IMR-90 (cell line): ENCODE measurements at regions of chr4 and their contacts with region 1.

Region 1: GRCh38 chr4:183074296-183074990 is 24.6 kb upstream of the WWC2 start:
- DNase-seq: peak; percentile 32
- ATAC-seq: peak; percentile 70
- H3K4me3 ChIP-seq: no peak overlapping the region
- H3K27ac ChIP-seq: no peak overlapping the region
- H3K4me1 ChIP-seq: no peaks in the 10 kb centered on the region; the same call in 1 of the 2 replicates
- H3K27me3 ChIP-seq: no peaks in the 10 kb centered on the region
- CTCF ChIP-seq: no peak
- POLR2A ChIP-seq: no peak
- RAD21 ChIP-seq: no peak

Region 2: DNA sequence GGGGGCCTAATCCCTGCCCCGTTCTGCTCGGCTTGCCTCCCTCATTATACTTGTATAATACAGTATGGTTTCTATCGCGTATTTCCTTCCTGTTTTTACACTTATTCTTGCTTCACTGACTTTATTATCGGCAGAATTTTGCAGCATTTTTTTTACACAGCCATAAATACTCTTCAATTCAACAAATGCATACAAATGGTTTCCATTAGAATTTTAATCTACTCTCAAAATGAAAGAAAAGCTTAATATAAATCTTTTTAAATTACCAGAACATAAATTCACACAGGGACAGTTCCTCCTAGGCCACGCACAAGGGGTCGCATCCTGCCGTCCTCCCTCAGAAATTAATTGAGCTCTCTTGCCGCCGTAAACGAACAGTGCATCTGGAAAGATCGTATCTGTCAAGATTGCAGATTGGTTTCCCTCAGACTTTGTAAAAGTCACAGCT is 200.1 kb before region 1 on chr4:
- CTCF ChIA-PET with region 1: no interaction called
- POLR2A ChIA-PET with region 1: no interaction called
- dilution Hi-C with region 1: no loop called
- in situ Hi-C with region 1: no loop called
- intact Hi-C with region 1: no loop called
- DNase-seq: no peak
- ATAC-seq: no peak
- H3K4me3 ChIP-seq: no peak overlapping the region
- H3K27ac ChIP-seq: no peak overlapping the region
- H3K4me1 ChIP-seq: no peaks in the 10 kb centered on the region
- H3K27me3 ChIP-seq: no peaks in the 10 kb centered on the region
- CTCF ChIP-seq: no peak
- POLR2A ChIP-seq: no peak
- RAD21 ChIP-seq: no peak

Region 3: GRCh38 chr4:182917182-182918043 is 157.0 kb before region 1 on chr4 and contains the start of gene DCTD:
- CTCF ChIA-PET with region 1: no interaction called
- POLR2A ChIA-PET with region 1: no interaction called
- dilution Hi-C with region 1: no loop called
- in situ Hi-C with region 1: no loop called
- intact Hi-C with region 1: no loop called
- DNase-seq: peak; percentile 65
- ATAC-seq: peak; percentile 85
- H3K4me3 ChIP-seq: peak within 1 kb of the TSS; percentile 65
- H3K27ac ChIP-seq: peak within 1 kb of the TSS; percentile 97
- H3K4me1 ChIP-seq: peaks cover 16% of the 10 kb centered on the region
- H3K27me3 ChIP-seq: no peaks in the 10 kb centered on the region
- CTCF ChIP-seq: peak; percentile 29
- POLR2A ChIP-seq: peak; percentile 39
- RAD21 ChIP-seq: no peak; the same call in 1 of the 2 replicates
- total RNA-seq, gene DCTD: 84.2 and 90.3 TPM in 2 replicates

Region 4: GRCh38 chr4:182938205-182938645 is 136.2 kb before region 1 on chr4:
- CTCF ChIA-PET with region 1: interaction called, 4 read pairs
- POLR2A ChIA-PET with region 1: no interaction called
- dilution Hi-C with region 1: no loop called
- in situ Hi-C with region 1: loop called (anchors 10 kb)
- intact Hi-C with region 1: loop called (anchors 1 kb)
- DNase-seq: peak; percentile 56
- ATAC-seq: peak; percentile 99
- H3K4me3 ChIP-seq: no peak overlapping the region
- H3K27ac ChIP-seq: no peak overlapping the region
- H3K4me1 ChIP-seq: peaks cover 2% of the 10 kb centered on the region; the same call in 1 of the 2 replicates
- H3K27me3 ChIP-seq: peaks cover 11% of the 10 kb centered on the region
- CTCF ChIP-seq: peak; percentile 90
- POLR2A ChIP-seq: no peak; the same call in 1 of the 2 replicates
- RAD21 ChIP-seq: peak; percentile 95

Region 5: DNA sequence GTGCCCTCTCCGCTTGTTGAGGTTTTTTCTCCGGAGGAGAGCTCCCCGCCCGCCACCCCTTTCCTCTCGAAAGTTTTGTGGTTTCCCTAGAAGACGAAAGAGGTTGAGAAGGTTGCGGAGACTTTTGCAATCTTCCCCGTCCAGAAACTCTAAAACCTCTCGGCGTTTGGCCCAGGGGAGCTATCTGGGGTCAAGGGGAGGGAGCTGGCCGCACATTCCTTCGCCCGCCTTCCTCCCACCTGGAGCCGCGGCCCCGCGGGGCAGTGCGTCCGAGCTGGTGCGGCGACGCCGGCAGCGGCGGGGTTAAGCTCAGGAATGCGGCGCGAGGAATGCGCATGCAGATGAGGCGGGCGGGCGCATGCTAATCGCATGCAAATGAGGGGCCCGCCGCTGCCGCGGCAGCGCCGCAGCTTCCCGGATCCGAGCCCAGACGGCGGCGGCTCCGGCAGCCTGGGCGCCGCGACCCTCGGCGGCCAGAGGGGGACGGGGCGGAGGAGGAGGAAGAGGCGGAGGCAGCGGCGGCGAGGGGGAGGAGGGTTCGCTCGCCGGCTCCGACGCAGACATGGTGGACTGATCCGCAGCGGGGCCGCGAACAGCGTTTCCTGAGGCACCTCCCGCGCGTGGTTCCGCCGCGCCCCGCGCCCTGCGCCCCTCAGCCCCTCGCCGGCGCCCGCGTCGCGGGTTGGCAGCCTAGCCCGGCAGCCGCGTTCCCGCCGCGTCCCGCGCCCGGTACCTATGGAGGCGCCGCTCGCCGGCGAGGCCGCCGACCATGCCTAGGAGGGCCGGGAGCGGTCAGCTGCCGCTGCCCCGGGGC is 24.5 kb after region 1 on chr4 and contains the start of gene WWC2:
- CTCF ChIA-PET with region 1: interaction called, 3 read pairs
- POLR2A ChIA-PET with region 1: no interaction called
- dilution Hi-C with region 1: no loop called
- in situ Hi-C with region 1: no loop called
- intact Hi-C with region 1: loop called (anchors 1 kb)
- DNase-seq: peak; percentile 92
- ATAC-seq: peak; percentile 82
- H3K4me3 ChIP-seq: peak within 1 kb of the TSS; percentile 90
- H3K27ac ChIP-seq: peak within 1 kb of the TSS; percentile 92
- H3K4me1 ChIP-seq: peaks cover 4% of the 10 kb centered on the region
- H3K27me3 ChIP-seq: no peaks in the 10 kb centered on the region
- CTCF ChIP-seq: 0 out of 2 replicates have a peak, but pooled peaks have one; percentile 12
- POLR2A ChIP-seq: peak; percentile 68; the same call in 1 of the 2 replicates
- RAD21 ChIP-seq: peak; percentile 2; the same call in 1 of the 2 replicates
- total RNA-seq, gene WWC2: 27.4 and 28.1 TPM in 2 replicates

Region 6: GRCh38 chr4:183249857-183250256 is 175.4 kb after region 1 on chr4:
- CTCF ChIA-PET with region 1: interaction called, 23 read pairs
- POLR2A ChIA-PET with region 1: no interaction called
- dilution Hi-C with region 1: no loop called
- in situ Hi-C with region 1: loop called (anchors 5 kb)
- intact Hi-C with region 1: loop called (anchors 1 kb)
- DNase-seq: peak; percentile 52
- ATAC-seq: peak; percentile 75
- H3K4me3 ChIP-seq: no peak overlapping the region
- H3K27ac ChIP-seq: no peak overlapping the region
- H3K4me1 ChIP-seq: no peaks in the 10 kb centered on the region
- H3K27me3 ChIP-seq: no peaks in the 10 kb centered on the region
- CTCF ChIP-seq: peak; percentile 57
- POLR2A ChIP-seq: no peak
- RAD21 ChIP-seq: peak; percentile 68

Region 7: DNA sequence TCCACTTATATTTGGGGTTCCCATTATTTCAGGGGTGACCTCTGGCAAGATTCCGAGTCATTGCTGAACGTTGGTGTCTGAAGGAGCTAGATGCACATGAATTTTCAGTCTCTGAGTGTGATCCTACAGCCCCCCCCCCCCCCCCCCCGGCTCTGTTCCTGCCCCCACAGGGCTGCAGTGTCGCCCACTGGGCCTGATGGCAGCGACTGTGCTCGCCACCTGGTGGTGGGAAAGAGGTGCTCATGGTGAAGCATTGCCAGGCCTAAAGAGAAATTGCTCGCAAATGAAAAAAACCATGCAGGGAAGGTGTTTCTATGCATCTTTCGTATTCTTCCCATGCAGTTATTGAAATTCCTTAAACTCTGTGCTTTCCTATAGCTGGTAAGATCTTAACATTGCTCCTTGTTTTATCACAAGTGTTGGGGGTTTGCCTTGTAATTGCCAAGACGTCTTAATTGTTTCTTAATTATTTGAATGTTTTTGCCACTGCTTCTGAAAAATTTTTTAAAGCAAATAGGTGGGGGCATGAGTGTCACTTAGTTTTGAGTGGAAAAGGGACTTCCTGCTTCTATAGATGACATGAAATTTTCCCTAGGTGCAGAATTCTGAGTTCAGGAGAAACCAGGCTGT is 182.4 kb after region 1 on chr4:
- CTCF ChIA-PET with region 1: interaction called, 17 read pairs
- POLR2A ChIA-PET with region 1: no interaction called
- dilution Hi-C with region 1: no loop called
- in situ Hi-C with region 1: loop called (anchors 5 kb)
- intact Hi-C with region 1: loop called (anchors 1 kb)
- DNase-seq: peak; percentile 54
- ATAC-seq: peak; percentile 85
- H3K4me3 ChIP-seq: no peak overlapping the region
- H3K27ac ChIP-seq: no peak overlapping the region
- H3K4me1 ChIP-seq: 0 out of 2 replicates have a peak, but pooled peaks cover 3% of the 10 kb centered on the region
- H3K27me3 ChIP-seq: no peaks in the 10 kb centered on the region
- CTCF ChIP-seq: peak; percentile 68
- POLR2A ChIP-seq: no peak
- RAD21 ChIP-seq: peak; percentile 66

Region 8: DNA sequence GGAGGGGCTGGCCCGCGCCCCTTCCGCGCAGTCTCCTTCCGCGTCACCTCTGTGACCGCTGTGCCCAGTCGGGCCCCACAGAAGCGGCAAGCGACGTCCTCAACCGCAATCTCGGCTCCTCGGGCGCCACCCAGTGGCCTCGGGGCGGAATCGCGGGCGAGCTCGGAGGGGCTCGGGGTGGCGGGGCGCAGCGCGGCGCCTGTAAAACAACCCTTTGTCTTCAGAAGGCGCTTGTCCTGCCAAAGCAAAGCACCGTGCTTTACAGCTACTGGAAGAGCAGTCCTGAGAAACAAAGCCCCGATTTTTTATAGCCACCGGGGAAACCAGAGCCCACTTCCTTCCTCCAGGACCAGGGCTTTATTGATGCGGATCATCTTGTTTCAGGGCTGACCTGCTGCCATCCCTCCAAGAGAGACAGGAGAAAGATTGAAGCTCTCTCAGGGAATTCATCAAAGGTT is 332.7 kb after region 1 on chr4:
- CTCF ChIA-PET with region 1: interaction called, 3 read pairs
- POLR2A ChIA-PET with region 1: no interaction called
- dilution Hi-C with region 1: no loop called
- in situ Hi-C with region 1: loop called (anchors 10 kb)
- intact Hi-C with region 1: loop called (anchors 5 kb)
- DNase-seq: peak; percentile 64
- ATAC-seq: peak; percentile 89
- H3K4me3 ChIP-seq: peak overlapping the region; percentile 50
- H3K27ac ChIP-seq: peak overlapping the region; percentile 53
- H3K4me1 ChIP-seq: no peaks in the 10 kb centered on the region
- H3K27me3 ChIP-seq: peaks cover 10% of the 10 kb centered on the region; the same call in 1 of the 2 replicates
- CTCF ChIP-seq: peak; percentile 85
- POLR2A ChIP-seq: no peak; the same call in 1 of the 2 replicates
- RAD21 ChIP-seq: peak; percentile 77